ENCODE measurements at regions of chr2 and their contacts with region 1.

Region 1: GRCh38 chr2:191051825-191052778 is 38.1 kb upstream of the STAT1 start:
- DNase-seq: peak; percentile 64
- H3K4me3 Mint-ChIP-seq: no peak overlapping the region
- H3K27ac Mint-ChIP-seq: no peak overlapping the region
- H3K4me1 Mint-ChIP-seq: peaks cover 10% of the 10 kb centered on the region
- H3K27me3 Mint-ChIP-seq: no peaks in the 10 kb centered on the region
- CTCF ChIP-seq: peak; percentile 59

Region 2: GRCh38 chr2:190984595-190984994 is 67.5 kb before region 1 on chr2:
- CTCF ChIA-PET with region 1: no interaction called
- POLR2A ChIA-PET with region 1: no interaction called
- intact Hi-C with region 1: no loop called
- DNase-seq: peak; percentile 83
- H3K4me3 Mint-ChIP-seq: no peak overlapping the region
- H3K27ac Mint-ChIP-seq: no peak overlapping the region
- H3K4me1 Mint-ChIP-seq: peaks cover 7% of the 10 kb centered on the region
- H3K27me3 Mint-ChIP-seq: no peaks in the 10 kb centered on the region
- CTCF ChIP-seq: no peak

Region 3: GRCh38 chr2:191038241-191038725 is 13.8 kb before region 1 on chr2:
- CTCF ChIA-PET with region 1: interaction called, 49 read pairs
- POLR2A ChIA-PET with region 1: interaction called, 9 read pairs
- intact Hi-C with region 1: no loop called
- DNase-seq: peak; percentile 35
- H3K4me3 Mint-ChIP-seq: no peak overlapping the region
- H3K27ac Mint-ChIP-seq: peak overlapping the region; percentile 74
- H3K4me1 Mint-ChIP-seq: peaks cover 19% of the 10 kb centered on the region
- H3K27me3 Mint-ChIP-seq: no peaks in the 10 kb centered on the region
- CTCF ChIP-seq: no peak

Region 4: DNA sequence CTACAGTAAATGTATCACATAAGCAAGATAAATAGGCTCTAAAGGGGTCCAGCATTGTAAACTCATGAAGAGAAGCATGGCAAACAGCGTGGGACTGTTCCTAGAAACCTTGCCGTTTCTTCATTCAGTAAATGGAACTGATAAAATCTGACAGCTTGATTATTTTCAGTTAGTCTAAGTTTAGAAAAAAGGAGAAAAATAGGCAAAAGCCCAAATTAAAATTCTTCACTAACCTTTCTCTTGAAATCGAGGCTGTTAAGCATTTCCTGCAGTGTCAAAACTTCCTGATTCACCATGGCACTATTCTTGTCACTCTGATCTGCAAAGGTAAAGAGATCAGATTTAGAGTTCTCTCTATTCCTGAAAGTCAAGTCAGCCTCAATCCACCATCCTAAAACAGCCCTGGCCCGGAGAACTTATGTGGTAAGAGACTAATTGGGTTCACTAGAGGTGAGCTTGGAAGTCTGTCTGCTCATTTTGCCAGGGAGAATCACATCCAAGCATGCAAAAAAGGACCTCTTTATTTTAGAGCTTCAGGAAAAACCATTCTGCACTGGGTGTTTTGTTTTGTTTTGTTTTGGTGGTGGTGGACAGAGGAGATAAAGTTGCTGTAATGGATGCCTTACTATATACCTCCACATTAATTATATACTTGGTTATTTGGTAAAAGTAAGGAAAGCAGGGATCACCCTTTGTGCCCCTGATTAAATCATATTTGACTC is 14.3 kb after region 1 on chr2:
- CTCF ChIA-PET with region 1: interaction called, 69 read pairs
- POLR2A ChIA-PET with region 1: interaction called, 4 read pairs
- intact Hi-C with region 1: no loop called
- DNase-seq: no peak
- H3K4me3 Mint-ChIP-seq: no peak overlapping the region
- H3K27ac Mint-ChIP-seq: no peak overlapping the region
- H3K4me1 Mint-ChIP-seq: peaks cover 4% of the 10 kb centered on the region
- H3K27me3 Mint-ChIP-seq: no peaks in the 10 kb centered on the region
- CTCF ChIP-seq: no peak

Region 5: DNA sequence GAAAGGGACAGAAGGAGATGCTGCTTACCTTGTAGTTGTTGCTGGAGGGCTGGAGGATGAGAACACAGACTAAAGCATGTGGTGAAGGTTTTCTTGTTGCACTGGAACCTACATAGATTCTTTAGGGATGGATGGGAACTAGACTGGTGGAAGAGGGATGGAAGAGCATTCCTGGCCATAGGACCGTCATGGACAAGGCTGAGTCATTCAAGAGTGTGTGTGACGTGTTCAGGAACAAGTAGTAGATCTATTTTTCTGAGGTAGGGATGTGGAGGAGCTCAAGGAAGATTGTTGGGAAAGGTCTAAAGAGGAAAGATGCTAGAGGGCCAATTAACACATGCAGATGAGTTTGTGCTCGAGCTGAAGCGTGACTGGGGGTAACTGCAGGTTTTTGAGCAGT is 92.1 kb after region 1 on chr2:
- CTCF ChIA-PET with region 1: interaction called, 604 read pairs
- POLR2A ChIA-PET with region 1: interaction called, 4 read pairs
- intact Hi-C with region 1: no loop called
- DNase-seq: no peak
- H3K4me3 Mint-ChIP-seq: no peak overlapping the region
- H3K27ac Mint-ChIP-seq: no peak overlapping the region
- H3K4me1 Mint-ChIP-seq: no peaks in the 10 kb centered on the region
- H3K27me3 Mint-ChIP-seq: peaks cover 7% of the 10 kb centered on the region
- CTCF ChIP-seq: no peak

Region 6: DNA sequence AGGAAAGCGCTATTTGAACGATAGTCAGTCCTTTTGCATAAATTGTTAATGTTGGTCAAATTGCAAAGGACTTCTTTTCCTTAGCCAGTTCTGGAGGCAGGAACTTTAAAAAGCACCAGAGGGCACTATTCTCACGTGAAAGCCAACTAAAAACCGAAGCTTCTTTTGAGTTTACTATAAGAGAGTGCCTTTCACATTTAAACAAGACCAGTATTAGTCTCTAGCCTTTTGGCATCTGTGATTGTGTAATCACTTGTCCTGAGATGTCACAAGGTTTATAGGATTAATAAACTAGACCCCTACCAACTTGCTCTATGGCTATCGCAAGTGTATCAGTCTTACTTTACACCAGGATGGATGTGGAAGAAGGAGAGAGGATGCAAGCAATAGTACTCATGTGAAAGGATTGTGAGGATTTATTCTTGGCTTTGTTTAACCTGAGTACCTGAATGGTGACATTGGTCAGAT is 113.1 kb after region 1 on chr2:
- CTCF ChIA-PET with region 1: interaction called, 604 read pairs
- POLR2A ChIA-PET with region 1: interaction called, 3 read pairs
- intact Hi-C with region 1: no loop called
- DNase-seq: peak; percentile 71
- H3K4me3 Mint-ChIP-seq: no peak overlapping the region
- H3K27ac Mint-ChIP-seq: no peak overlapping the region
- H3K4me1 Mint-ChIP-seq: peaks cover 36% of the 10 kb centered on the region
- H3K27me3 Mint-ChIP-seq: no peaks in the 10 kb centered on the region
- CTCF ChIP-seq: peak; percentile 51

Region 7: GRCh38 chr2:191515551-191515950 is 463.4 kb after region 1 on chr2:
- CTCF ChIA-PET with region 1: interaction called, 12 read pairs
- POLR2A ChIA-PET with region 1: no interaction called
- intact Hi-C with region 1: no loop called
- DNase-seq: no peak
- H3K4me3 Mint-ChIP-seq: no peak overlapping the region
- H3K27ac Mint-ChIP-seq: no peak overlapping the region
- H3K4me1 Mint-ChIP-seq: no peaks in the 10 kb centered on the region
- H3K27me3 Mint-ChIP-seq: no peaks in the 10 kb centered on the region
- CTCF ChIP-seq: no peak

Region 8: GRCh38 chr2:191521608-191522208 is 469.6 kb after region 1 on chr2:
- CTCF ChIA-PET with region 1: interaction called, 43 read pairs
- POLR2A ChIA-PET with region 1: no interaction called
- intact Hi-C with region 1: loop called (anchors 1 kb)
- DNase-seq: peak; percentile 57
- H3K4me3 Mint-ChIP-seq: no peak overlapping the region
- H3K27ac Mint-ChIP-seq: no peak overlapping the region
- H3K4me1 Mint-ChIP-seq: no peaks in the 10 kb centered on the region
- H3K27me3 Mint-ChIP-seq: no peaks in the 10 kb centered on the region
- CTCF ChIP-seq: peak; percentile 51

Measured in MCF 10A (cell line).